Dorsolateral prefrontal cortex (tissue), 120 donors: ENCODE measurements at regions of chr14 and their contacts with region 1.

Region 1: DNA sequence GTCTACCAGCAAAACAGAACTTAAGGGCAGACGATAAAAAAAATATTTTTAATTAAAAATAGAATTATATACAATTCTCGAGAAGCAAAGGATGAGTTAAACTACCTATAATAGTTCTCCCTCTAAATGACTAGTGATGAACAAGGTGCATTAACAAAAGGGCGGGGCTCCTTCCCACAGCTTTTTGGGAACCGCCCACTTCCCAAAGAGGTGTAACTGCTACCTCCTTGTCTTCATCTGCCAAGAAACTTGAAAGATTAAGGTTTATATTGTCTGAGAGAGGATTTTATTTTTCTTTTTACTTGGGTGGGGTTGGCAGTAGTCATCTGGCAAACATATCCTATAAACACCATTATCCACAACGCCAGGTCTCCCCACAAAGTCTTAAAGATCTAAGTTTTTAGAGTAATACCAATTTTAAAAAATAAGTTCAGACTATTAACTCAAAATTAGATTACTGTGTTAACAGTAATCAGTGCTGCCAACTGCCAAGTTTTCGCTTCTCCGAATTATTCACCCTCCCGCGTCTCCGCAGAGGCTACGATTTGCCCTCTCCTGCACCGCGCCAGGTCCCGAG is 931 bp downstream of the RALGAPA1 start:
- DNase-seq: no peak
- H3K4me3 ChIP-seq: peak overlapping the region; percentile 60 to 93 (median 83)
- H3K27ac ChIP-seq: peak overlapping the region; percentile 5 to 95 (median 88)
- H3K27me3 ChIP-seq: no peaks in the 10 kb centered on the region
- CTCF ChIP-seq: no peak

Region 2: GRCh38 chr14:35750202-35750904 is 57.8 kb before region 1 on chr14:
- intact Hi-C with region 1: loop called in 1 of 2 experiments (anchors 10 kb)
- DNase-seq: no peak
- H3K4me3 ChIP-seq: peak overlapping the region in 27 of 59 donors; percentile 0 to 53 (median 18)
- H3K27ac ChIP-seq: peak overlapping the region in 56 of 59 donors; percentile 2 to 94 (median 80)
- H3K27me3 ChIP-seq: no peaks in the 10 kb centered on the region
- CTCF ChIP-seq: peak in 1 of 56 donors; percentile 23

Region 3: DNA sequence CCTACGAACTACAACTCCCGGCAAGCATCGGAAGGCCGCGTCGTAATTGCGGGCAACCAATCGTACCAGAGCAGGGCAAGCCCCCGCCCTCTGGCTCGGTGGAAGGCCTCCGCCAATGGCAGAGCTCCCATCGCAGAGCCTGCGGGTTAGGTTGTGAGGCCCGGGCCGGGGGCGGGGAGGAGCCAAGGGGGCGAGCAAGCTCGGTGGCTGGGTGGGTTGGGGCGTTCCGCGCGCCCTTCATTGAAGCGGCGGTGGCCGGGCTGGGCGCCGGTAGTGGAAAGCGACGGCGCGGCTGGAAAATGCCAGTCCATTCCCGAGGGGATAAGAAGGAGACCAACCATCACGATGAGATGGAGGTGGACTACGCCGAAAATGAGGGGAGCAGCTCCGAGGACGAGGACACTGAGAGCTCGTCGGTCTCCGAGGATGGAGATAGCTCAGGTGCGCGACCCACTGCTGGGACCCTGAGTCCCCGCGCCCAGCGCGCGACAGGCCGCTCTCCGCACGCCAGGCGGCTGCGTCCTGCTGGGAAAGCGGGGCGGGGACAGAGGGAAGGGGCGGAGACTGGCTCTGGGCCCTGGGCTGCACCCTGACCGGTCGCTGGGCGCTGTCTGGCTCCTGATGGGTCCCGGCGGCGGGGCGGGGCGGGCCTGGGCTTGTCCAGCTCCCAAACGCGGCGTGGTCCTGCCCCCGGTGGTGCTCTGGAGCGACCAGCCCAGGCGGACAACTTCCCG is 18.2 kb after region 1 on chr14 and contains the start of gene BRMS1L:
- intact Hi-C with region 1: no loop called
- DNase-seq: peak; percentile 95 to 99 (median 99)
- H3K4me3 ChIP-seq: peak within 1 kb of the TSS; percentile 71 to 99 (median 91)
- H3K27ac ChIP-seq: peak within 1 kb of the TSS; percentile 90 to 100 (median 98)
- H3K27me3 ChIP-seq: no peaks in the 10 kb centered on the region
- CTCF ChIP-seq: peak in 32 of 56 donors; percentile 5 to 43 (median 24)
- total RNA-seq, gene BRMS1L: 12.3 to 33.5 (median 21.4) TPM